ENCODE measurements at regions of chr19 and their contacts with region 1.

Region 1: GRCh38 chr19:7943444-7944176 is at the start of gene TIMM44:
- DNase-seq: peak; percentile 97
- ATAC-seq: peak; percentile 96
- H3K4me3 Mint-ChIP-seq: peak within 1 kb of the TSS; percentile 91
- H3K27ac Mint-ChIP-seq: peak within 1 kb of the TSS; percentile 97
- H3K4me1 Mint-ChIP-seq: peaks cover 33% of the 10 kb centered on the region
- H3K27me3 Mint-ChIP-seq: no peaks in the 10 kb centered on the region
- CTCF ChIP-seq: no peak
- total RNA-seq, gene TIMM44: 78.4 and 92.5 TPM in 2 replicates

Region 2: GRCh38 chr19:7799640-7800355 is 143.8 kb before region 1 on chr19:
- CTCF ChIA-PET with region 1: no interaction called
- POLR2A ChIA-PET with region 1: no interaction called
- intact Hi-C with region 1: no loop called
- DNase-seq: peak; percentile 35
- ATAC-seq: peak; percentile 76
- H3K4me3 Mint-ChIP-seq: peak overlapping the region; percentile 66
- H3K27ac Mint-ChIP-seq: peak overlapping the region; percentile 46
- H3K4me1 Mint-ChIP-seq: peaks cover 13% of the 10 kb centered on the region
- H3K27me3 Mint-ChIP-seq: peaks cover 13% of the 10 kb centered on the region
- CTCF ChIP-seq: no peak

Region 3: GRCh38 chr19:7868676-7869452 is 74.7 kb before region 1 on chr19:
- CTCF ChIA-PET with region 1: interaction called, 8 read pairs
- POLR2A ChIA-PET with region 1: interaction called, 7 read pairs
- intact Hi-C with region 1: loop called (anchors 2 kb)
- DNase-seq: peak; percentile 83
- ATAC-seq: peak; percentile 75
- H3K4me3 Mint-ChIP-seq: peak overlapping the region; percentile 81
- H3K27ac Mint-ChIP-seq: peak overlapping the region; percentile 73
- H3K4me1 Mint-ChIP-seq: peaks cover 41% of the 10 kb centered on the region
- H3K27me3 Mint-ChIP-seq: peaks cover 30% of the 10 kb centered on the region
- CTCF ChIP-seq: peak; percentile 56

Region 4: GRCh38 chr19:7888145-7888825 is 55.3 kb before region 1 on chr19 and contains the start of gene LRRC8E:
- CTCF ChIA-PET with region 1: no interaction called
- POLR2A ChIA-PET with region 1: no interaction called
- intact Hi-C with region 1: no loop called
- DNase-seq: no peak
- ATAC-seq: peak; percentile 71
- H3K4me3 Mint-ChIP-seq: no peak within 1 kb of the TSS
- H3K27ac Mint-ChIP-seq: no peak within 1 kb of the TSS
- H3K4me1 Mint-ChIP-seq: no peaks in the 10 kb centered on the region
- H3K27me3 Mint-ChIP-seq: peaks cover 16% of the 10 kb centered on the region
- CTCF ChIP-seq: no peak
- total RNA-seq, gene LRRC8E: not detected in 2 replicates

Region 5: GRCh38 chr19:7925171-7925851 is 18.3 kb before region 1 on chr19:
- CTCF ChIA-PET with region 1: interaction called, 6 read pairs
- POLR2A ChIA-PET with region 1: interaction called, 49 read pairs
- intact Hi-C with region 1: loop called (anchors 1 kb)
- DNase-seq: peak; percentile 75
- ATAC-seq: peak; percentile 8
- H3K4me3 Mint-ChIP-seq: peak overlapping the region; percentile 84
- H3K27ac Mint-ChIP-seq: no peak overlapping the region
- H3K4me1 Mint-ChIP-seq: peaks cover 30% of the 10 kb centered on the region
- H3K27me3 Mint-ChIP-seq: peaks cover 1% of the 10 kb centered on the region
- CTCF ChIP-seq: peak; percentile 29

Region 6: GRCh38 chr19:8017808-8018207 is 74.2 kb after region 1 on chr19:
- CTCF ChIA-PET with region 1: no interaction called
- POLR2A ChIA-PET with region 1: no interaction called
- intact Hi-C with region 1: no loop called
- DNase-seq: peak; percentile 25
- ATAC-seq: peak; percentile 100
- H3K4me3 Mint-ChIP-seq: no peak overlapping the region
- H3K27ac Mint-ChIP-seq: peak overlapping the region; percentile 19
- H3K4me1 Mint-ChIP-seq: peaks cover 13% of the 10 kb centered on the region
- H3K27me3 Mint-ChIP-seq: no peaks in the 10 kb centered on the region
- CTCF ChIP-seq: no peak

Region 7: GRCh38 chr19:8108560-8109445 is 165.2 kb after region 1 on chr19:
- CTCF ChIA-PET with region 1: no interaction called
- POLR2A ChIA-PET with region 1: no interaction called
- intact Hi-C with region 1: no loop called
- DNase-seq: no peak
- ATAC-seq: no peak
- H3K4me3 Mint-ChIP-seq: no peak overlapping the region
- H3K27ac Mint-ChIP-seq: no peak overlapping the region
- H3K4me1 Mint-ChIP-seq: no peaks in the 10 kb centered on the region
- H3K27me3 Mint-ChIP-seq: peaks cover 7% of the 10 kb centered on the region
- CTCF ChIP-seq: no peak

Region 8: DNA sequence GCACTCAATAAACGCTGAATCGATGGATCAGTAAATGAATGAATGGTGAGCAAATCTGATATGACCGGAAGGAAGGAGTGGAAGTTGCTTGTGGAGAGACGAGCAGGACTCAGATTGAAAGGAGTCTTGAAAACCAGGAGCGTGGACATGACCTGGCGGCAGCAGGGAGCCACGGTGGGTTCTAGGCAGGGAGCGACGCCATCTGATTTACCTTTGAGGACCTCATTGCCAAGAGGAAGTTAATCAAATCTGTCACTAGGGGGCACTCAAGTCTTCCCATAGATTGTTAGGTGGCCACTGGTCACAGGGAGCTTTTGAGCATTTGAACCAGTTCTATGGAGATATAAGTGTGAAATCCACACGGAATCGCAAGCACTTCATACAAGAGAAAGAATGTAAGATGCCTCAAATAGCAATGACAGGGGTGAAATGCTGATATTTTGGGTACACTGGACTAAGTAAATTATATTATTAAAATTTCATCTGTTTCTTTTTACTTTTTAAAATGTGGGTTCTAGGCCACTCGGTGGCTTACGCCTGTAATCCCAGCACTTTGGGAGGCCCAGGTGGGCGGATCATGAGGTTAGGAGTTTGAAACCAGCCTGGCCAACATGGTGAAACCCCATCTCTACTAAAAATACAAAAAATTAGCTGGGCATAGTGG is 214.9 kb after region 1 on chr19:
- CTCF ChIA-PET with region 1: interaction called, 4 read pairs
- POLR2A ChIA-PET with region 1: no interaction called
- intact Hi-C with region 1: loop called (anchors 1 kb)
- DNase-seq: no peak
- ATAC-seq: peak; percentile 65
- H3K4me3 Mint-ChIP-seq: no peak overlapping the region
- H3K27ac Mint-ChIP-seq: peak overlapping the region; percentile 61
- H3K4me1 Mint-ChIP-seq: peaks cover 23% of the 10 kb centered on the region
- H3K27me3 Mint-ChIP-seq: peaks cover 10% of the 10 kb centered on the region
- CTCF ChIP-seq: no peak

Region 9: DNA sequence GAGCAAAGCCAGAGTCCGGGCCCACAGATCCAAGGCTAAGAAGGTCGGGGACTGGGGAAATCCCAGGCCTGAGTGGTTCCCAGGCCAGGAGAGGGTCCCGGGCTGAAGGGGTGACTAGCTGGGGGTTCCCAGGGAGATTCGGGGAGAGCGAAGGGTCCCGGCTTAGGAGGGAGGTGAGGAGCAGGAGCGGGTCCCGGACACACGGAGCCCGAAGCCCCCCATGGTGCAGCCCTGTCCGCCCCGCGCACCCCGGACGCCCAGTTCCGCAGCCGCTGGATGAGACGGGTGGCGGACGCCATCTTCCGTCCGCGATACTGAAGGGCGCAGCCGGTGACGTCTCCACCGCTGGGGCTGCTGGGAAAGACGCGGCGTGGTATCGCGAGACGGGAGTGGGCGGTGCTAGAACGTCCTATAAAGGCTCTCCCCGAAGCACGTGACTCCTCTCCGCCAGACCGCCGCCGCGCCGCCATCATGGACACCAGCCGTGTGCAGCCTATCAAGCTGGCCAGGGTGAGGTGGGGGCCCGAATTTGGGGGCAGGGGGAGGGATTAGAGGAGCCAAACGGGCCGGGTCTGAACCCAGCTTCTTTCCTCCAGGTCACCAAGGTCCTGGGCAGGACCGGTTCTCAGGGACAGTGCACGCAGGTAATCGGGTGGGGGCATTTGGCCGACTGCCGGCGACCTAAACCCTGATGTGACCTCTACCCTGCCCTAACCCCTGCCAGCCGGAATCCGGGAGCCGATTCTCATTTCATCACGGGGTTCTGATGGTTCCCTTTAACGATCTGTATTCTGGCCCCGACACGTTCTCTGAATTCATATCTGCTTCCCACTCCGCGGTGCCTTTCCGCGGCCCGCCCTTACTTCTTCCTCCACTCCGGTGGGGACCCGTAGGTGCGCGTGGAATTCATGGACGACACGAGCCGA is 377.7 kb after region 1 on chr19 and contains the starts of genes NDUFA7 and RPS28:
- CTCF ChIA-PET with region 1: no interaction called
- POLR2A ChIA-PET with region 1: interaction called, 3 read pairs
- intact Hi-C with region 1: loop called (anchors 1 kb)
- DNase-seq: peak; percentile 97
- ATAC-seq: peak; percentile 95
- H3K4me3 Mint-ChIP-seq: peak within 1 kb of the TSS; percentile 98
- H3K27ac Mint-ChIP-seq: peak within 1 kb of the TSS; percentile 96
- H3K4me1 Mint-ChIP-seq: peaks cover 37% of the 10 kb centered on the region
- H3K27me3 Mint-ChIP-seq: no peaks in the 10 kb centered on the region
- CTCF ChIP-seq: no peak
- total RNA-seq, gene NDUFA7: 31.1 and 35.8 TPM in 2 replicates
- total RNA-seq, gene RPS28: 3,149 and 3,168 TPM in 2 replicates

Measured in activated B cell treated with CpG ODN at 0.5 μM for 24 hours (primary cell).